WTC11 (cell line): ENCODE measurements at regions of chr7 and their contacts with region 1.

Region 1: DNA sequence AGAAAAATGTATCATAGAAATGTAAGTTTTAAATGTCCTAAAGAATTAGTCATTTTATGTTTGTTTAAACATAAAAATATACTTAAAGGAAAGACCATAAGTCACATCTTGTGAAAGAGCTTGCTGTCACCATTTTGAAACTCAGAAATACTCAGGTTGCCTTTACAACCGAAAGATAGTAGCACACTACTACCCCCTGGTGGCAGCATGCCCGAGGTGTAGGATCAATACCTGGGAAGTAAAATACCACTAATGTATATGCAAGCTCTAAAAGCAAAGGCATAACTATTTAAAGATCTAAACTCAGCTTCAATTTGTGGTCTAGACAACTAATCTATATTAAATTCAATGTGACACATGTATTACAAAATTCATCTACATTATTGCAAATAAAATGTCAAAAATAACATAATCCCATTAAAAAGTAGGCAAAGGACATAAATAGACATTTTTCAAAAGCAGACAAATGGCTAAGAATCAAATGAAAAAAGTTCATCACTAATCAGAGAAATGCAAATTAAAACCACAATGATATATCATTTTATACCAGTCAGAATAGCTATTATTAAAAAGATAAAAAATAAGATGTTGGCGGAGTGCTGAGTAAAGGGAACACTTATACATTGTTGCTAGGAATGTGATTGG is 47.7 kb upstream of the FGL2 start:
- DNase-seq: peak; percentile 93
- ATAC-seq: peak; percentile 87
- H3K4me3 Mint-ChIP-seq: no peak overlapping the region
- H3K27ac Mint-ChIP-seq: no peak overlapping the region
- H3K4me1 Mint-ChIP-seq: peaks cover 16% of the 10 kb centered on the region
- H3K27me3 Mint-ChIP-seq: no peaks in the 10 kb centered on the region
- CTCF ChIP-seq: peak; percentile 72

Region 2: DNA sequence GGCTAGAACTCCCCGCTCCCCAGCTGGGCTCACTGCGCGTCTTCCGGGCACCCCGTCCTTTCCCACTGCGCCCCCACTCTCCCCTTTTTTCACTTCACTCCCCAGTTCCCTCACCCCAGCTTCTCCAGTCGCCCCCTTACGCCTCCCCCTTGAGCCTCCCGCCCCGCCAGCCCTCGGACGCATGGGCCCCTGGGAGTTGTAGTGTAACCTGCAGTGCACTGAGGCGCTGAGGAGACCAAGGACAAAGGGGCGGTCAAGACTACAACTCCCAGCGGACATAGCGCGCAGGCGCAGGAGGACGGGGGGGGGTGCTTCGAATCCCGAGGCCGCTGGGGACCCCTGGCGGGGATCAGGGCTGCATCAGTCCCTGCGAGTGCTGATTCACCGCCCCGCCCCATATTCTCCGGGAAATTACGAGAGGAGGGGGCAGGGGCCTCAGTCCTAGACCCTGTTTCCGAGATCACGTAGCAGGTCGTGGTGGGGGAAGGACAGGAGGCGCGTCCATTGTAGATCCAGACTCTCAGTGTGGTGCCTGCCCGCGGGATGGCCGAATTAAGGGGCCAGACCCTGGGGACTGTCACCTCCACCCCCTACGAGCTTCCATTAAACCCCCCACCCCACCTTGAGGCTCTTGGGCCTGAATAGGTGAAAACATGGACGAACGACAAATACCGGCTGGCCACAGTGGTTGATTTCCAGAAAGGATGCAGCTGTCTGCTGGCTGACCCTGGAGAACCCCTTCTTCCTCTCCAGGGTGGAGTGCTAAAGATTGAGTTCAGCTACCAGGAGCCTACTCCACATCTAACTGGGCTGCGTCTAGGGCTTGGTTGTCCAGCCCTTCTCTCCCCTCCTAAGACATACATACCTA is 888.0 kb before region 1 on chr7:
- CTCF ChIA-PET with region 1: no interaction called
- POLR2A ChIA-PET with region 1: no interaction called
- DNase-seq: peak; percentile 96
- ATAC-seq: peak; percentile 95
- H3K4me3 Mint-ChIP-seq: peak overlapping the region; percentile 73
- H3K27ac Mint-ChIP-seq: peak overlapping the region; percentile 95
- H3K4me1 Mint-ChIP-seq: peaks cover 43% of the 10 kb centered on the region
- H3K27me3 Mint-ChIP-seq: no peaks in the 10 kb centered on the region; the same call in 1 of the 2 replicates
- CTCF ChIP-seq: peak; percentile 33; the same call in 1 of the 2 replicates

Region 3: DNA sequence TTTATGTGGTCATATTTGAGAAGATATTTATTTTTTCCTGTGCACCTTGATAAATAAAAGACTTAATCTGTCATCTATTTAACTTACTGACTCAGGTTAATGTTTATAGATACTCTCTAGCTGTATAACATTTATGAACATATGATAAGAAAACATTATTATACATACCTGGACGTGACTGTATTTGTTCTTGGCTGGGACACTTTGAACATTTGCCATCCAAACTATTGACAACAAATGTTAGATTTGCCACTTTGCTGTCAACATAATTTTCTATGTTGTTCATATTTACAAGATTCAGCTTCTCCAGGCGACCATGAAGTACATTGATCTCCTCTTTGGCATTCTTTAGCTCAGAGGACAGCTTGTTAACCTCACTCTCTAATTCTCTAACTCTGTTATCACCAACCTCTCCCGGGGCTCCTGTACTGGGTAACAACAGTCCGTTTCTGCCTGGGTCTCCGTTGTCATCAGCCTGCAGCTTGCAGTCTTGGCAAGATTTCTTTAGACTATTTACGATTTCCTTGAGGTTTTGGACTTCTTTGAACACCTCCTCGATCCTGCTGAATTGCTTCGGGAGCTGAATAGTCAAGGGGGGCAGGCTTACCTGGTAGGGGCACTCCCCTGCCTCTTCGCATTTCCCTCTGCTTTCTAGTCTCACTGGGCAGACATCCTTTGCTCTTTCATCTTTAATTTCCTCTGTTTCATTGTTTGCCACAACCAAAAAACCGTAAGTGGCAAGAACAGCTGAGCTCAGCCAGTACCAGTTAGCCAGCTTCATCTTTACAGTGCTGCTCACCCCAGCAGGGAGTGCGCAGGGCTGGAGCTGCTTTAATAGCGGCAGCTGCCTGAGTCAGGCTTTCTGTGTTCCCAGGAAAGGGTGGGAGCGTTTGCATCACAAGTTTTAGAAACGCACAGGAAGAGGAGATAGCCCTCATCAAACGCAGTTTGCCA is 48.0 kb before region 1 on chr7 and contains the start of gene FGL2:
- CTCF ChIA-PET with region 1: interaction called, 17 read pairs
- POLR2A ChIA-PET with region 1: no interaction called
- DNase-seq: peak; percentile 25
- ATAC-seq: peak; percentile 86
- H3K4me3 Mint-ChIP-seq: peak within 1 kb of the TSS; percentile 48
- H3K27ac Mint-ChIP-seq: no peak within 1 kb of the TSS; the same call in 1 of the 2 replicates
- H3K4me1 Mint-ChIP-seq: peaks cover 6% of the 10 kb centered on the region
- H3K27me3 Mint-ChIP-seq: no peaks in the 10 kb centered on the region; the same call in 1 of the 2 replicates
- CTCF ChIP-seq: no peak
- total RNA-seq, gene FGL2: 0.05 TPM in 1 of 3 replicates, not detected in the others

Region 4: GRCh38 chr7:77269360-77270093 is 22.2 kb after region 1 on chr7:
- CTCF ChIA-PET with region 1: interaction called, 11 read pairs
- POLR2A ChIA-PET with region 1: no interaction called
- DNase-seq: no peak
- ATAC-seq: no peak
- H3K4me3 Mint-ChIP-seq: no peak overlapping the region
- H3K27ac Mint-ChIP-seq: no peak overlapping the region
- H3K4me1 Mint-ChIP-seq: no peaks in the 10 kb centered on the region
- H3K27me3 Mint-ChIP-seq: peaks cover 2% of the 10 kb centered on the region; the same call in 1 of the 2 replicates
- CTCF ChIP-seq: no peak

Region 5: GRCh38 chr7:77331938-77332695 is 84.8 kb after region 1 on chr7:
- CTCF ChIA-PET with region 1: interaction called, 42 read pairs
- POLR2A ChIA-PET with region 1: no interaction called
- DNase-seq: peak; percentile 29
- ATAC-seq: peak; percentile 98
- H3K4me3 Mint-ChIP-seq: no peak overlapping the region
- H3K27ac Mint-ChIP-seq: no peak overlapping the region
- H3K4me1 Mint-ChIP-seq: peaks cover 8% of the 10 kb centered on the region
- H3K27me3 Mint-ChIP-seq: no peaks in the 10 kb centered on the region
- CTCF ChIP-seq: no peak